ENCODE measurements at regions of chr3 and their contacts with region 1.

Region 1: DNA sequence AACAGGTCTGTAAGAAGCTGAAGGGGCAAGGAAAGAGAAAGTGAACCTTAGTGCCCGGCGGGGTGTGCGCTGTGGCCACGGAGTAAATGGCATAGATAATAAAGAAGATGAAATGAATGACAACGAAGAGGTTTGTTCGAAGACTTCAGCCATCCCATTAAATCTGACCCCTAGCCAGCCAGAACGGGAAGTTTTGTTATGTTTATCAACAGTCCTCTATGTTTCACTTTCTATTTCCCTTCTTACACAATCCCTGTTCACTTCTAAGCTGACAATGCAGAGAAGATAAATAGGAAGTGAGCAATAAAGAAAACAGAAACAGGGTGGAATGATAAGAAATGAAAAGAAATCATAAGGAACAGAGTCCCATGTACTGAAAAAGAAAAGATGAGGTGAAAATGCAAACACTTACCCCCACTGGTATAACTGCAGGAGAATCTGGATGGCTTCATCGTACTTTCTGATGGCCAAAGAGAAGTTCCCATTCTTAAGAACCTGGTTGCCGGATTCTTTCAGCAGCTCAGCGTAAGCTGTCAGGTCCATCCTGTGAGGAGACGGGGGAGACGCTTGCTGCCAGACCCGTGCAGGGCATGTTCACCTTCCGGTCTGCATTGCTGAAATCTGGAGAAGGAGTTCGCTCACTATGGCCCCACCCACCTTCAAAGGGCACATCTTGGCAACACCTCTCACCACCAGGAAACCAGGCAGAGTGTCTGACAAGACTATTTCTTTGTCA is 36.8 kb downstream of the TRANK1 start:
- DNase-seq: peak; percentile 72
- H3K4me3 ChIP-seq: peak overlapping the region; percentile 33 to 56 (median 50)
- H3K27ac ChIP-seq: peak overlapping the region; percentile 66 to 71 (median 70)
- H3K4me1 ChIP-seq: peaks cover 0 to 26% (median 16%) of the 10 kb centered on the region in 4 donors
- H3K27me3 ChIP-seq: no peaks in the 10 kb centered on the region
- CTCF ChIP-seq: no peak
- EP300 ChIP-seq: no peak
- POLR2A ChIP-seq: no peak

Region 2: DNA sequence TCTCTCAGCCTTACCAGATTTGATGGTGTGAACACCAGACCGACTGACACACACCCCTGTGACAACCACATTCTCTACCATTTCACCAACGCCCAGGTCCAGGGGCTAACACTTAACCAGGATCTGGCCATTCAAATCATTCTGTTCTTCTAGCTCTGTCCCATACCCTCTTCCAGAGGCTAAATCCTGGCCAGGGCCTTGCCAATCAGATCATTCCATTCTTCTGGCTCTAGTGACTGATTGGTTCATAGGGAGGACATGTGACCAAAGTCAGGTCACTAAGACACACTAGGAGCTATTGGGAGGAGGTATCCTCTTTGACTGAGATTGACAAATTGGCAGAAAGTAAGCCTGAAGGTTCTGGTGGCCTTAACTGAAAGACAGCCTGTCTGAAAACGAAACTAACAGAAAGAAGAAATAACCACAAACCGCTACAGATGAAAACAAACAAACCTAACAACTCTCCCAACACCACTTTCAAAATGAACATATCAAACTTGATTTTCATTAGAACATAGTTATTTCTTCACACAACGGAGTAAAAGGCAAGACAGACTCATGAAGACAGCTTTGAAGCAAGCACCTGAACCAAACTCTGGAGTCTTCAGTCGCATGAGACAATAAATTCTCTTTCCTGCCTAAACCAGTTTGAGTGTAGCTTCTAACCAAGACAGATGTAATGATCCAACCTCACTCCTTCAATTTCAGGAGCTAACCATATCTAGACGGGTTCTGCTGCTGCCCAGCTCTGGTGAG is 31.7 kb before region 1 on chr3:
- intact Hi-C with region 1: no loop called
- DNase-seq: no peak
- H3K4me3 ChIP-seq: no peak overlapping the region
- H3K27ac ChIP-seq: no peak overlapping the region
- H3K4me1 ChIP-seq: no peaks in the 10 kb centered on the region
- H3K27me3 ChIP-seq: no peaks in the 10 kb centered on the region
- CTCF ChIP-seq: no peak
- EP300 ChIP-seq: no peak
- POLR2A ChIP-seq: no peak

Region 3: GRCh38 chr3:36944012-36944640 is 36.0 kb after region 1 on chr3:
- intact Hi-C with region 1: loop called (anchors 5 kb)
- DNase-seq: peak; percentile 80
- H3K4me3 ChIP-seq: peak overlapping the region; percentile 45 to 85 (median 76)
- H3K27ac ChIP-seq: peak overlapping the region; percentile 70 to 80 (median 78)
- H3K4me1 ChIP-seq: peaks cover 0 to 34% (median 10%) of the 10 kb centered on the region in 4 donors
- H3K27me3 ChIP-seq: no peaks in the 10 kb centered on the region
- CTCF ChIP-seq: no peak
- EP300 ChIP-seq: no peak
- POLR2A ChIP-seq: no peak

Region 4: DNA sequence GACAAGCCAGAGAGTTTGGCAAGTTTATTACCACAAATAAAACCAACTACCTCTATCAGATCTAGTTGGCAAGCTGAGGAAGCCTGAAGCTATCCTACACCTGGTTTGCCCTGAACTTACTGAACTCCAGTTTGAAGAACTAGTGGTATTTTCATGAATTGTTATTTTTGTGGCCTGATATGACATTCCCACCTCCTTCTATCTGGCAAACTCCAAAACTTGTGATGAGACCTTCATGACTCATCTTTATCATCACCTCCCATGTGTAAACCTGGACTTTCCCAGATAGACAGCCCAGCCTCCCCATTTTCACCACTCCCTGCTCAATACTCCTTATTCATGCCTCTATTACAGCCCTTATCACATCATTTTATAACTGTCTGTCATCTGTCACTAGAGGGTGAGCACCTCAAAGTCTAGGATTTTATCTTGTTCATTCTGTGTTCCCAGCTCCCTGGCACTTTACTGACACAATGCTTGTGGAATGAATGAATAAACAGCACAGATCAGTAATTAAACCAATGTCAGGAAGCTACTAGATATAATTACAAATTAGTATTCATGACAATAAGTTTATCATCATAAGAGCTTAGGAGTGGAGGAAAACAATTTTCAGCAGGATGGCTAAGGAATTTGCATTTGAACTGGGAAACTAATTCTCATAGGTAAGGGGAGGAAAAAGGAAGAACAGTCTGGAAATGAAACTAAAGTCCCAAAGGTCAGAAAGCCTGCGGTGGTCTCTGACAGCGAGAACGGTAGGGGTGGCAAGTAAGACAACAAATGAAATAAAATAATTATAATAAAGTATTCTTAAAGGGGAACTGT is 50.0 kb after region 1 on chr3:
- intact Hi-C with region 1: loop called (anchors 5 kb)
- DNase-seq: no peak
- H3K4me3 ChIP-seq: no peak overlapping the region
- H3K27ac ChIP-seq: no peak overlapping the region
- H3K4me1 ChIP-seq: peaks cover 0 to 11% (median 4%) of the 10 kb centered on the region in 4 donors
- H3K27me3 ChIP-seq: no peaks in the 10 kb centered on the region
- CTCF ChIP-seq: no peak
- EP300 ChIP-seq: no peak
- POLR2A ChIP-seq: no peak

Region 5: DNA sequence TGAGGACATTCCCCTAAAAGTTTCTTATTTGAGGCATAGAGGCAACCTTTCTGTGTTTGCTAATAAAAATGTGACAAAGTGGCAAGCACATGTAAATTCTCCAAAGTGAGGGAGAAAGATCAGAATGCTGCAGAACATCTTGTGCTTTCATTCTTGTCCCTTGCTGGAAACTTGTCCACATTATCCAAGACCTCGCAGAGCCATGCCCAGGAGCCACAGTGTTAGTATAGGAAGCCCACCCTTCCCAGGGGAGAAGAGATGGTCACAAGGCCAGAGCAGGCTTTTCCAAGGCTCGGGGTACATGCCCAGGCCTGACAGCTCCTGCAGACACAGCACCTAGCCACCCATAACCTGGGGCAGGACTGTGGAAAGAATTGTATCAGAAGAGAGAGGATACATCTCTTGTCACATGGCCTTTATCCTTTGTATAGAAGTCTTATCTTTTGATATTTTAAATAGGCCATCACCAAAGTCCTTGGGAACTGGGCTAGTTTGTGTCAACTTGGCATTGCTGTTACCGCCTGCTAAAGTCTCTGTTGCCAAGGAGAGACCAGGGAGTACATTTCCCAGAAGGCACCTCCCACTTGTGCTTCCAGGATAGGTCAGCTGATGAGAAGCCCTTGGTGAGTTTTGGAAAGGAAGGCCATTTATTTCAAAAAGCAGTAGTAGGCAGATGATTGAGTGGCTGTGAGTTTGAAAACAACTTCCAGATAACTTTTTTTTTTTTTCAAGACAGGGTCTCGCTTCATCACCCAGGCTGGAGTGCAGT is 1141.5 kb after region 1 on chr3:
- intact Hi-C with region 1: no loop called
- DNase-seq: no peak
- H3K4me3 ChIP-seq: no peak overlapping the region
- H3K27ac ChIP-seq: no peak overlapping the region
- H3K4me1 ChIP-seq: no peaks in the 10 kb centered on the region
- H3K27me3 ChIP-seq: no peaks in the 10 kb centered on the region
- CTCF ChIP-seq: no peak
- EP300 ChIP-seq: no peak
- POLR2A ChIP-seq: no peak

Measured in sigmoid colon (tissue), 7 donors.